Endothelial cell of umbilical vein (primary cell): ENCODE measurements at regions of chr13 and their contacts with region 1.

Region 1: DNA sequence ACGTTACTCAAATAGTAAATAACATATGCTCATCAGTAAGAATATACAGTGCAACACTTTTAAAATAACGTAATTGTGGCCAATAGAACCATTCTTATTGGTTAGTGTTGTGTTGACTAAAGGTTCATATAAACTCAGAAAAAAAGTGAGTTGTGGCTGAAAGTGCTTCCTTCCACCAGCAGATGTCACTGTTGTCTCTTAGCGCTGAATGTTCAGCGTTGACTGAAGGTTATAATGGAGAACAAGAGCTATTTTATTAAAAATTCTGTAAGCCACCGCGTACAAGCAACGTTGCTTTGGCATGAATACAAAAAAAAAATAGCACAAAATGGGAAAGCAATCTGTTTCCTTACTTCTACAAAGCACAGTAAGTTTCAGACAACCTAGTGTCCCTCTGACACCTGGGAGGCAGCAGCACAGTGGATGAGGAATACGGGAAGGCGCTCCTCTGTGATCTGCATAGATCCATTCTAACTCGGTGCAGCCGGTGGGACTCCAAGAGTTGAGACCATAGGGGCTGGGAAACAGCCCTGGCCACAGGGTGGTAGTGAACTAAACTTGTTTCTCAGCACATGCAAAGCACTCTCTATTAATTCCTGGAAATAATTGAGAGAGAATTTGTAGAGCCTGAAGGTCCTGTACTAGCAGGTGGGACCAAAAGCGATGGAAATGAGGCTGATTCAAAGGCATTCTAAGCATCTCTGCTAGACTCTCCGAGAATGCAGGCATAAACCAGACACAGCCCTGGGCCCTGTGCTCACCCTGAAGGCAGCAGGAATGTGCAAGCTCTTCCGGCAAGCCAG is 24.0 kb upstream of the OXGR1 start:
- DNase-seq: peak; percentile 70
- H3K4me3 ChIP-seq: no peak overlapping the region
- H3K27ac ChIP-seq: no peak overlapping the region
- H3K4me1 ChIP-seq: no peaks in the 10 kb centered on the region
- H3K27me3 ChIP-seq: peaks cover 14 to 18% of the 10 kb centered on the region in 2 experiments
- CTCF ChIP-seq: peak; percentile 71 to 78
- POLR2A ChIP-seq: no peak

Region 2: GRCh38 chr13:96020155-96020575 is 998.1 kb before region 1 on chr13:
- CTCF ChIA-PET with region 1: interaction called, 17 read pairs
- POLR2A ChIA-PET with region 1: no interaction called
- dilution Hi-C with region 1: no loop called
- intact Hi-C with region 1: no loop called
- DNase-seq: peak; percentile 77
- H3K4me3 ChIP-seq: no peak overlapping the region
- H3K27ac ChIP-seq: no peak overlapping the region
- H3K4me1 ChIP-seq: peaks cover 9% of the 10 kb centered on the region
- H3K27me3 ChIP-seq: no peaks in the 10 kb centered on the region
- CTCF ChIP-seq: peak; percentile 70 to 71
- POLR2A ChIP-seq: no peak

Region 3: DNA sequence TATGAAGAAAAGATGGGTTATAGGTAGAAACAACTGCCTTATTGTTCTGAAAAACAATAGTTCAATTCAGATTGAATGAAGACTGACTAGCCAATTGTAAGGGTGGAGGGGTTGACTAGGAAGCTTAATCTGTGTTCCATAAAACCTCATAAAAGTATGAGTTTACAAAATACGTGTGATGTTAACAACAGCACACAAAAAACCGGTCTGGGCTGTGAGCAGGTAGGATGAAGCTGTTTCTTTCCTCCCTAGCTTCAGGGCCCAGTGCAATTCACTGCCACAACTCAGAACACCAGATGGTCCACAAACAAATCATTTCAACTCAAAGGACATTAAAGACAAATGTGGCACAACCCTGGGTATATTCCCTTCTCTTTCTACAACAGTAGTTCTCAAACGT is 27.2 kb before region 1 on chr13:
- CTCF ChIA-PET with region 1: interaction called, 17 read pairs
- POLR2A ChIA-PET with region 1: no interaction called
- dilution Hi-C with region 1: no loop called
- intact Hi-C with region 1: no loop called
- DNase-seq: no peak
- H3K4me3 ChIP-seq: no peak overlapping the region
- H3K27ac ChIP-seq: no peak overlapping the region
- H3K4me1 ChIP-seq: no peaks in the 10 kb centered on the region
- H3K27me3 ChIP-seq: peaks cover 58 to 66% of the 10 kb centered on the region in 2 experiments
- CTCF ChIP-seq: no peak
- POLR2A ChIP-seq: no peak

Region 4: DNA sequence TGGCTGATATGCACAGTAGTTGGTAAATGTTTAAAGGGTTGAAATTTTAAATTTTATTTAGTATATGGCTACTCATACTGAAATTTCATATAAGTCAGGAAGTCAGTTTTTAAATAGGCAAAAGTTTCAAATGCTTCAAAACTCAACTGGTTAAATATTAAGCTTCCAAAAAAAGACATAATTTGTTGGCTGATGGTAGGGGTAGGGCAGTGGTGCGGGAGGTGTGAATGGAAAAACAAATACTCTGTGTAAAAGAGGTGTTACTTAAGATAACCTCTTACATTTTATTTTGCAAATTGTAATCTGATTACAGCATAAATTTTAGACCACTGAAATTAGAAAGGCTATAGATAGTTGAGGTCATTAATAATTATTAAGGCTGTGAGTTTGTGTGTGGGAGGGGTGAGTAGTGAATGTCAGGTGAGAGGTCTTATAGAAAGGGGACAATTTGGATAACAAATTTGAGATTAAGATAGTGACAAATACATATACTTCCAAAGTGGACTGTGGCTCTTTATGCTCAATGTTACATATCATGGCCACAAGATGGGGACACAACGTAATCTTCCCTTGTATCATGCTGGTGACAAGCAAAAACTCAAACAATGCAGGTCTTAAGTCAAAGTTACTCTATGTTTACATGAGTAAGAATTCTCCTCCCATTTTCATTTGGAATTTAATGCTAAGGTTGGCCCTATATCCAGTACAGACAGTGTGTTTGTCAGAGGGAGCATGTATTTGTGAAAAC is 12.6 kb after region 1 on chr13:
- CTCF ChIA-PET with region 1: interaction called, 26 read pairs
- POLR2A ChIA-PET with region 1: no interaction called
- dilution Hi-C with region 1: no loop called
- intact Hi-C with region 1: loop called (anchors 1 kb)
- DNase-seq: peak; percentile 76
- H3K4me3 ChIP-seq: no peak overlapping the region
- H3K27ac ChIP-seq: no peak overlapping the region
- H3K4me1 ChIP-seq: peaks cover 19% of the 10 kb centered on the region
- H3K27me3 ChIP-seq: no peaks in the 10 kb centered on the region
- CTCF ChIP-seq: peak; percentile 29 to 33
- POLR2A ChIP-seq: no peak

Region 5: DNA sequence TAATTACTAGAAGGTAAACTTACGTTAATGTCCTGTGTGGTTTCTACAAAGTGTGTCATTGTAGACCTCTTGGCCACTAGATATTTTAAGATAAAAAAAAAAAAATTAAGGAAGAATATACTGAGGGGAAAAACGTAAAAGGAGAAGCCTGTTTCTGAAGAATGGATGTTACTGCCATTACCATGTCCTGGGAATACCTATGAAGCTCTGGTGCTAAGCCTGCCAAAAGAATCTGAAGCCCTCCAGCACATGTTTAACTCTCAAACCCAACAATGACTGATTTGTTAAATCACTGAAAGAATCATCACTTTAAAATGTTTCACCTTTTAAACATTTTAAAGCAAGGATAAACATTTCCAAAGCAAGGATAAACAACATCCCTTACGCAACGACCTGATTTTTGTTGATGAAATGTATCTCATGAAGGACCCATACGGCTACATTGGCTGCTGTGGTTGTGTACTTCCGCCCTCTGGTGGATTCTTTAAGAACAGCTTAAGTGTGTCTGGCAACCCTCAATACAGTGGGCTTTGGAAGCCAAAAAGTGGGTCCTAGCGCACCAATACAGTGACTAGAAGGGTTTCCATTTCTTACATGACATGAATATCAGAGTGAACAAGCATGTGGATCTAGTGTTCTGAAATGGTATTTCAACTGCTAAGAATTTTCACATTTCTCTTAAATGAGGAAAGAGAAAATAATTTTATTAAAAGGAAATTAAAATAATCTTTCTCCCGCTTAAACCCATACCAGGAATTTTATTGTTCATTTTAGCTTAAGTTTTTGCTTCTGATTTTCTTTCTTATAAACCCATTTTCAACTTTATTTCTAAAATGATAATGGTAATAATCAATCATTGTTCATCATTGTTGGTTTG is 341.2 kb after region 1 on chr13:
- CTCF ChIA-PET with region 1: interaction called, 38 read pairs
- POLR2A ChIA-PET with region 1: no interaction called
- dilution Hi-C with region 1: no loop called
- intact Hi-C with region 1: no loop called
- DNase-seq: peak; percentile 81
- H3K4me3 ChIP-seq: no peak overlapping the region
- H3K27ac ChIP-seq: peak overlapping the region; percentile 20
- H3K4me1 ChIP-seq: no peaks in the 10 kb centered on the region
- H3K27me3 ChIP-seq: no peaks in the 10 kb centered on the region
- CTCF ChIP-seq: peak; percentile 66 to 80
- POLR2A ChIP-seq: no peak

Region 6: DNA sequence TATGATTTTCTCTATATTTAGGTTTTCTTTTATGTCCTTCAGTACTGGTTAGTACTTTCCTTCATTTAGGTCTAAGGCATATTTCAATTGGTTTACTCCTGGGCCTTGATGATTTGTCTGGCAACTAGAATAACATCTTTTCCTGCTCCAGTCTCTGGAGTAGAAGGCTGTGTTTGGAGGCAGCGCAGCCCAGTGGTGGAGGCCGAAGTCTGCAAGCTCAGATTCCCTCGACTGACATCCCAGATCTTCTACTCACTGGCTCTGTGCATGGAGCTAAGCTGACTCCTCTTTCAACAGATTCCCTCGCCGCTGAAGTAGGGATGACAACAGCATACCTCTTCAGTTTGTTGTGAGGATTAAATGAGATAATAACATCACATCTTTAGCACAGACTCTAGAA is 556.7 kb after region 1 on chr13:
- CTCF ChIA-PET with region 1: interaction called, 10 read pairs
- POLR2A ChIA-PET with region 1: no interaction called
- dilution Hi-C with region 1: no loop called
- intact Hi-C with region 1: no loop called
- DNase-seq: peak; percentile 20
- H3K4me3 ChIP-seq: no peak overlapping the region
- H3K27ac ChIP-seq: no peak overlapping the region
- H3K4me1 ChIP-seq: no peaks in the 10 kb centered on the region
- H3K27me3 ChIP-seq: peaks cover 0 to 4% of the 10 kb centered on the region in 2 experiments
- CTCF ChIP-seq: peak; percentile 15 to 30
- POLR2A ChIP-seq: no peak

Region 7: GRCh38 chr13:97810152-97810551 is 791.9 kb after region 1 on chr13:
- CTCF ChIA-PET with region 1: interaction called, 14 read pairs
- POLR2A ChIA-PET with region 1: no interaction called
- dilution Hi-C with region 1: no loop called
- intact Hi-C with region 1: no loop called
- DNase-seq: peak; percentile 34
- H3K4me3 ChIP-seq: no peak overlapping the region
- H3K27ac ChIP-seq: no peak overlapping the region
- H3K4me1 ChIP-seq: no peaks in the 10 kb centered on the region
- H3K27me3 ChIP-seq: peaks cover 7% of the 10 kb centered on the region in 2 experiments
- CTCF ChIP-seq: peak; percentile 14 to 20
- POLR2A ChIP-seq: no peak